ENCODE measurements at regions of chr11 and their contacts with region 1.

Region 1: DNA sequence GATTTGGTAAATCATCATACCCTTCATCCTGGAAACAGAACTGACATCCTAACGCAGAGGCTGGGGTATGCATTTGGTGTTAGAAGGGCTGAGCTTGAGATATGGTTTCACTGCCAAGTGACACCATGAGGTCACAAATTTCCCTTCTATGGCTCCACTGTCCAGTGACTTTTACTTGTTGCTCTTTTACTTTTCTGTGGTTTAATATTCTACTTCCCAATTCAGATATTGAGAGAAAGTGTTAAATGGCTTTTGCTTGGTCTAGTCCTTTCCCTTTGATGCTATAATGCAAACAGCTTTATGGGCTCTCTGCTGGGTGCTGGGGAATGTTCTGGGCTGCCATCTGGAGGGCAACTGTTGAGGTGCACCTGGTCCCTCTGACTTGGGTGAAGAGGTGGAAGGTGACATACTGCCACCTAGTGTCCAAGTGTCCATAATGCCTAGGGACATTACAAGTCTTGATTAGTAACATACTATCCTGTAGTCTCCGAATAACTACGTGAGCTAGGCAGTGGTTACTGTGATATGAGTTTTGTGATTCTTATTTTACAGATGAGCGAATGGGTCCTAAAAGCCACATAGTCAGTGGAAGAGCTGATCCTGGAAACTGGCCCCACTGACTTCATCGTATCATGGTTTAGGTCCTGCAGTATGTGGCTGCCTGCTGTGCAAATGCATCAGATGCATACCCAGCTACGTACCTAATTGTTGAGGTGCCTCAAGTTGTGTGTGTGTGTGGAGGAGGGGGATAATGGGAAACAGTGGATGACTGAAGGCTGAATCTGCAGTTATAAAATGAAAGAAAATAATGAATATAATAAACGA is 149.1 kb upstream of the RAG2 start:
- DNase-seq: peak; percentile 49 to 92
- ATAC-seq: peak; percentile 96 to 99
- H3K4me3 ChIP-seq: no peak overlapping the region
- H3K27ac ChIP-seq: no peak overlapping the region
- H3K4me1 ChIP-seq: no peaks in the 10 kb centered on the region
- CTCF ChIP-seq: peak; percentile 99
- EP300 ChIP-seq: no peak
- POLR2A ChIP-seq: no peak
- RAD21 ChIP-seq: peak; percentile 75 to 83

Region 2: GRCh38 chr11:36564376-36565030 is 182.6 kb before region 1 on chr11:
- CTCF ChIA-PET with region 1: interaction called, 155 read pairs
- POLR2A ChIA-PET with region 1: no interaction called
- DNase-seq: peak; percentile 15 to 56
- ATAC-seq: peak; percentile 89 to 93
- H3K4me3 ChIP-seq: peak overlapping the region; percentile 30; the same call in 2 of the 3 replicates
- H3K27ac ChIP-seq: no peak overlapping the region
- H3K4me1 ChIP-seq: no peaks in the 10 kb centered on the region
- CTCF ChIP-seq: peak; percentile 88
- EP300 ChIP-seq: no peak
- POLR2A ChIP-seq: no peak
- RAD21 ChIP-seq: peak; percentile 81 to 86

Region 3: DNA sequence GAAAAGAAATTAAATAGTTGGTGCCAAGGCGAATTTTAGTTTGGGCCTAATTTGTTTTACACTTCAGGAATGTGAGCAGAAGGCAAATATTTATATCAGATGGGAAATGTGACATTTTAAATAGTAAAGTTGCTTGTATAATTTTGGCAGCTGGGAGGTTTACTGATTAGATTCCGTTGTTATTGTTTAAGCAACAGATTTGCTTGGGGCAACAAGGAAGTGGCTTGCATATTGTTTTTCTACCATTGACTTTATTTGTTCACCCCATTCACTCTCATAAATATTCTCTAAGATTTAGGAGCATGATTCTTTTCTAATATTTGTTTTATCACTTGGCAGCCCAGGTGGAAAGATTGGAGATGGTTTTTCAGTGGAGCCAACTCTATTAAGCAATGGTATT is 108.5 kb before region 1 on chr11:
- CTCF ChIA-PET with region 1: no interaction called
- POLR2A ChIA-PET with region 1: no interaction called
- DNase-seq: no peak
- ATAC-seq: no peak
- H3K4me3 ChIP-seq: no peak overlapping the region
- H3K27ac ChIP-seq: no peak overlapping the region
- H3K4me1 ChIP-seq: no peaks in the 10 kb centered on the region
- CTCF ChIP-seq: no peak
- EP300 ChIP-seq: no peak
- POLR2A ChIP-seq: no peak
- RAD21 ChIP-seq: no peak

Region 4: GRCh38 chr11:36688571-36689291 is 58.4 kb before region 1 on chr11:
- CTCF ChIA-PET with region 1: interaction called, 15 read pairs
- POLR2A ChIA-PET with region 1: no interaction called
- DNase-seq: no peak
- ATAC-seq: no peak
- H3K4me3 ChIP-seq: no peak overlapping the region
- H3K27ac ChIP-seq: no peak overlapping the region
- H3K4me1 ChIP-seq: no peaks in the 10 kb centered on the region
- CTCF ChIP-seq: no peak
- EP300 ChIP-seq: no peak
- POLR2A ChIP-seq: no peak
- RAD21 ChIP-seq: no peak

Region 5: DNA sequence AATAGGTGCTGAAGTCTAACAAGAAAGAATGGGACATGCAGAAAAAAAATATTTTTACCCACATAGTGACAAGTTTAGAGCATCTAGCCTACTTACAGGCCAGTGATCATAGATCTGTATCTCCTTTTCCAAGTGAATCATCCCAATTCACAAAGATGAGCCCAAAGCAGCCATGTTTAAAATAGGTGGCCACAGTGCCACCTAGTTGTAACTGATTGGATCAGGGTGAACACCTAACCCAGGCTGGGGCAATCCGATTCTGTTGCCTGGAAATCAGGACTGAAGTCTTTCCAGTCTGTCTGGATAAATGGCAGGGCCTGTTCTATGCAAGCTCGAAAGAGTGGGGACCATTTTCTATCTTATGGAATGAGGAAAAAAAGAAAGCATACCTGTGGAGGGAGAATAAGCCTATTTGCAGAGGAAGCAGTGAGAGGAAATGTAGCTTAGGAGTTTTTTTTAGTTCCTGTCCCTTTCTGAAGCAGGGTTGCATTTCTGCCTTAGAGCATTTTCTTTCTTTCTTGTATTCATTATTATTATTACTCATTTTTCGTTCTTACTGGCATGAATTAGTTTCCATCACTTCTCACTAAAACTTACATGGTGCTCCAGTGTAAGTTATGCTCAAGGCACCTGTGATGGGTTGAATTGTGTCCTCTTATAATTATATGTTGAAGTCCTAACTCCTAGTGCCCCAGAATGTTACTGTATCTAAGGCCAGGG is 35.8 kb before region 1 on chr11:
- CTCF ChIA-PET with region 1: interaction called, 22 read pairs
- POLR2A ChIA-PET with region 1: no interaction called
- DNase-seq: peak; percentile 6 to 10
- ATAC-seq: peak; percentile 73; a peak in 4 of 6 replicates
- H3K4me3 ChIP-seq: no peak overlapping the region
- H3K27ac ChIP-seq: no peak overlapping the region
- H3K4me1 ChIP-seq: no peaks in the 10 kb centered on the region
- CTCF ChIP-seq: no peak
- EP300 ChIP-seq: no peak
- POLR2A ChIP-seq: no peak
- RAD21 ChIP-seq: no peak

Region 6: DNA sequence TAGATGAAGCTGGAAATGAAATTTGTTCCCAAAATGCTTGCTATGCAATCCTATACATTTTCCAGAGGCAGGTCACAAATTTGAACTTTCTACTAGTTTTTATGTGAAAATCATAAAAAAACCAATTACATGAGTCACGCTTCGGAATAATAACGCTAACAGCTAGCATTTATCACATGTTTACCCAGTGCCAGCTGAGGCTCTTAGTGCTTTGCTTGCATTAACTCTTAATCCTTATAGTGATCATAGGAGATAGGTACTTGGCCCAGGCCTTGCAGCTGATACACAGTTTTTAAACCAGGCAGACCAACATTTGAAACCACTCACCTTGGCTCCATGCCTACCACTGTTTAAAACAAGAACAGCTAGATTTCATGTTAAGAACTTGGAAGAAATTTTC is 17.3 kb before region 1 on chr11:
- CTCF ChIA-PET with region 1: interaction called, 82 read pairs
- POLR2A ChIA-PET with region 1: no interaction called
- DNase-seq: no peak
- ATAC-seq: no peak
- H3K4me3 ChIP-seq: no peak overlapping the region
- H3K27ac ChIP-seq: no peak overlapping the region
- H3K4me1 ChIP-seq: no peaks in the 10 kb centered on the region
- CTCF ChIP-seq: no peak
- EP300 ChIP-seq: no peak
- POLR2A ChIP-seq: no peak
- RAD21 ChIP-seq: no peak